Caco-2 (cell line): ENCODE measurements at regions of chr7 and their contacts with region 1.

Region 1: GRCh38 chr7:80699045-80699638 is 60.7 kb downstream of the CD36 start:
- DNase-seq: peak in 1 of 2 experiments; percentile 65
- H3K4me3 ChIP-seq: no peak overlapping the region
- H3K4me3 Mint-ChIP-seq: no peak overlapping the region
- H3K27ac Mint-ChIP-seq: no peak overlapping the region
- H3K4me1 ChIP-seq: 0 out of 2 replicates have a peak, but pooled peaks cover 5% of the 10 kb centered on the region
- H3K4me1 Mint-ChIP-seq: peaks cover 9% of the 10 kb centered on the region
- H3K27me3 ChIP-seq: no peaks in the 10 kb centered on the region
- H3K27me3 Mint-ChIP-seq: no peaks in the 10 kb centered on the region
- CTCF ChIP-seq: peak; percentile 35 to 70

Region 2: GRCh38 chr7:80732630-80733029 is 33.5 kb after region 1 on chr7:
- CTCF ChIA-PET with region 1: no interaction called
- POLR2A ChIA-PET with region 1: interaction called, 4 read pairs
- intact Hi-C with region 1: loop called (anchors 1 kb)
- DNase-seq: peak in 1 of 2 experiments; percentile 29
- H3K4me3 ChIP-seq: no peak overlapping the region
- H3K4me3 Mint-ChIP-seq: no peak overlapping the region
- H3K27ac Mint-ChIP-seq: no peak overlapping the region
- H3K4me1 ChIP-seq: 0 out of 2 replicates have a peak, but pooled peaks cover 9% of the 10 kb centered on the region
- H3K4me1 Mint-ChIP-seq: peaks cover 7% of the 10 kb centered on the region
- H3K27me3 ChIP-seq: no peaks in the 10 kb centered on the region
- H3K27me3 Mint-ChIP-seq: no peaks in the 10 kb centered on the region
- CTCF ChIP-seq: peak; percentile 34 to 51

Region 3: DNA sequence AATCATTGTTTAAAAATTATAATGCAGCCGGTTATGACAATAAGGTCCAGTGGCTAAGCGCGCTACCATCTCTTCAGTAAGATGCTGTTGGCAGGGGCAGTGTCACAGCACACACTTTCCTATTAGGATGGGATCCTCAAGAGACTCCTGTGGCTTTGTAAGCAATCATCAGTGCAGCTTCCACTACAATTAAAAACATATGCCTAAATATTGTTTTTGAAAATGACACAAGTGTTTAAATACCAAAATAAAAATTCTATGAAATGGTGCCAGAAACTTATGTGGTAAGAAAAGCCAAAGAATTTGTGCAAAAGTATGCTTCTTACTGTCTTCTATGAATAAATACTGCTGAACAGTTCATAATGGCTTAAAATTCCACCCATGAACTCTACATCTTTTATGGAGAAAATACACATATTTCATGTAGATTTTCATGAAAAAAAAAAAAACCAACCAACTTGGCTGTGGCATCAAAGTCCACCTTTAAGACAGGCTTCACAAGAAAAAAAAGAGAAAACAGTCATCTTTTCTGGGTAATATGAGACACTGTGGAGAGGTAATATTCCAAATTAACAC is 86.9 kb after region 1 on chr7:
- CTCF ChIA-PET with region 1: no interaction called
- POLR2A ChIA-PET with region 1: no interaction called
- intact Hi-C with region 1: loop called (anchors 5 kb)
- DNase-seq: no peak
- H3K4me3 ChIP-seq: no peak overlapping the region
- H3K4me3 Mint-ChIP-seq: no peak overlapping the region
- H3K27ac Mint-ChIP-seq: no peak overlapping the region
- H3K4me1 ChIP-seq: no peaks in the 10 kb centered on the region
- H3K4me1 Mint-ChIP-seq: no peaks in the 10 kb centered on the region
- H3K27me3 ChIP-seq: no peaks in the 10 kb centered on the region
- H3K27me3 Mint-ChIP-seq: no peaks in the 10 kb centered on the region
- CTCF ChIP-seq: no peak

Region 4: GRCh38 chr7:80869821-80870751 is 170.9 kb after region 1 on chr7:
- CTCF ChIA-PET with region 1: no interaction called
- POLR2A ChIA-PET with region 1: no interaction called
- intact Hi-C with region 1: no loop called
- DNase-seq: peak; percentile 32 to 55
- H3K4me3 ChIP-seq: no peak overlapping the region
- H3K4me3 Mint-ChIP-seq: peak overlapping the region; percentile 41
- H3K27ac Mint-ChIP-seq: peak overlapping the region; percentile 49
- H3K4me1 ChIP-seq: peaks cover 32% of the 10 kb centered on the region
- H3K4me1 Mint-ChIP-seq: peaks cover 27% of the 10 kb centered on the region
- H3K27me3 ChIP-seq: no peaks in the 10 kb centered on the region
- H3K27me3 Mint-ChIP-seq: no peaks in the 10 kb centered on the region
- CTCF ChIP-seq: no peak

Region 5: GRCh38 chr7:81256991-81257390 is 557.8 kb after region 1 on chr7:
- CTCF ChIA-PET with region 1: no interaction called
- POLR2A ChIA-PET with region 1: no interaction called
- intact Hi-C with region 1: loop called (anchors 1 kb)
- DNase-seq: peak in 1 of 2 experiments; percentile 13
- H3K4me3 ChIP-seq: no peak overlapping the region
- H3K4me3 Mint-ChIP-seq: no peak overlapping the region
- H3K27ac Mint-ChIP-seq: no peak overlapping the region
- H3K4me1 ChIP-seq: peaks cover 9% of the 10 kb centered on the region; the same call in 1 of the 2 replicates
- H3K4me1 Mint-ChIP-seq: peaks cover 9% of the 10 kb centered on the region
- H3K27me3 ChIP-seq: no peaks in the 10 kb centered on the region
- H3K27me3 Mint-ChIP-seq: no peaks in the 10 kb centered on the region
- CTCF ChIP-seq: peak in 1 of 2 experiments; percentile 17

Region 6: DNA sequence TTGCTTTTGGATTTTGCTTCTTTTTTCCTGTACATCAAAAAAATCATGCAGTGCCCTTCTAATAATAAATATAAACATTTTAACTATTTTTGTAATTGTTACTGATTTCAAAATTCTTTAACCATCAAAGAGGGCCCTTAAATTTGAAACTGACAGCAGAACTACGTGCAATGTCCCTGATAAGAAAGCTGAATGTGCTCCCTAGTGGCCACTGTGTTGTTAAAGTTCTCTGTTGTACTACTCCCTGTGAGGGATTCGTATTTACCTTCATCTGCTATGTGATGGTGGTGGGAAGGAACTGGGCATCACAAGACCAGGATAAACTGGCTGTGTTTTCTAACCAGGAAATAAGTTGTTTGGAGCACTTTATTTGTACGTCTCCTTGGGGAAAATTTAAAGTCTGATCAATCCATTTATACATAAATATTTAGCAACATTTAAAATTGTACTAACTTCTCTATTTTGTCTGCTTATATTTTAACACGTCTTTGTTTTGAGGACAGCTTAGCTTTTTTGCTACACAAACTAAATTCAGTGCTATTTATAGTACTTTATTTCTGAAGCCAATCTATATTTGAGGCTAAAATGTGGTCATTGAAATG is 748.3 kb after region 1 on chr7:
- CTCF ChIA-PET with region 1: no interaction called
- POLR2A ChIA-PET with region 1: no interaction called
- intact Hi-C with region 1: loop called (anchors 1 kb)
- DNase-seq: peak; percentile 47 to 51
- H3K4me3 ChIP-seq: no peak overlapping the region
- H3K4me3 Mint-ChIP-seq: no peak overlapping the region
- H3K27ac Mint-ChIP-seq: no peak overlapping the region
- H3K4me1 ChIP-seq: no peaks in the 10 kb centered on the region
- H3K4me1 Mint-ChIP-seq: peaks cover 11% of the 10 kb centered on the region
- H3K27me3 ChIP-seq: no peaks in the 10 kb centered on the region
- H3K27me3 Mint-ChIP-seq: no peaks in the 10 kb centered on the region
- CTCF ChIP-seq: peak; percentile 62 to 72

Region 7: GRCh38 chr7:81457852-81458522 is 758.8 kb after region 1 on chr7:
- CTCF ChIA-PET with region 1: no interaction called
- POLR2A ChIA-PET with region 1: no interaction called
- intact Hi-C with region 1: loop called (anchors 1 kb)
- DNase-seq: no peak
- H3K4me3 ChIP-seq: no peak overlapping the region
- H3K4me3 Mint-ChIP-seq: no peak overlapping the region
- H3K27ac Mint-ChIP-seq: no peak overlapping the region
- H3K4me1 ChIP-seq: 0 out of 2 replicates have a peak, but pooled peaks cover 3% of the 10 kb centered on the region
- H3K4me1 Mint-ChIP-seq: peaks cover 11% of the 10 kb centered on the region
- H3K27me3 ChIP-seq: no peaks in the 10 kb centered on the region
- H3K27me3 Mint-ChIP-seq: no peaks in the 10 kb centered on the region
- CTCF ChIP-seq: peak; percentile 23 to 49

Region 8: GRCh38 chr7:81469869-81470723 is 771.0 kb after region 1 on chr7:
- CTCF ChIA-PET with region 1: interaction called, 8 read pairs
- POLR2A ChIA-PET with region 1: no interaction called
- intact Hi-C with region 1: loop called (anchors 1 kb)
- DNase-seq: peak; percentile 77
- H3K4me3 ChIP-seq: no peak overlapping the region
- H3K4me3 Mint-ChIP-seq: no peak overlapping the region
- H3K27ac Mint-ChIP-seq: no peak overlapping the region
- H3K4me1 ChIP-seq: peaks cover 11% of the 10 kb centered on the region
- H3K4me1 Mint-ChIP-seq: peaks cover 26% of the 10 kb centered on the region
- H3K27me3 ChIP-seq: no peaks in the 10 kb centered on the region
- H3K27me3 Mint-ChIP-seq: no peaks in the 10 kb centered on the region
- CTCF ChIP-seq: peak; percentile 77 to 79